ENCODE measurements at regions of chrX and their contacts with region 1.

Region 1: GRCh38 chrX:106415276-106415895 is 196.4 kb upstream of the RADX start:
- DNase-seq: peak; percentile 9
- ATAC-seq: no peak
- H3K4me3 Mint-ChIP-seq: no peak overlapping the region
- H3K27ac Mint-ChIP-seq: no peak overlapping the region
- H3K4me1 Mint-ChIP-seq: no peaks in the 10 kb centered on the region
- H3K27me3 Mint-ChIP-seq: no peaks in the 10 kb centered on the region

Region 2: DNA sequence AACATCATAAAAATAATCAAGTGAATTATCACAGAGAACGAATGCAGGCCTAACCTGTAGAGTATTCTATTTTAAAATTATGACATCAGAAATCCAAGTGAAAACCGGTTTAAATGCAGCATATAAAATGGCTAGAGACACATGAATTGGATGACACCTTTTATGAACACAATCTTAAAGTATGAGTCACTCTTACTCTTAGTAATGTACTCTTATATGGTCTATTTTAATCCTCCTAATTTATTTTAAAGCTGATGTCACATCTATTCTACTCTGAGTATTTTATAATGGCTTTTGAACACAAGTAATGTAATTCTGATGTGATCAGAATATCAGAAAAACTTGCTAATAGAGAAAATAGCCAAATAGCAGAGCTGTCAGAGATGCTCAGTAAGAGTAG is 35.0 kb after region 1 on chrX:
- CTCF ChIA-PET with region 1: no interaction called
- POLR2A ChIA-PET with region 1: no interaction called
- intact Hi-C with region 1: no loop called
- DNase-seq: no peak
- ATAC-seq: no peak
- H3K4me3 Mint-ChIP-seq: no peak overlapping the region
- H3K27ac Mint-ChIP-seq: no peak overlapping the region
- H3K4me1 Mint-ChIP-seq: no peaks in the 10 kb centered on the region
- H3K27me3 Mint-ChIP-seq: peaks cover 2% of the 10 kb centered on the region

Region 3: DNA sequence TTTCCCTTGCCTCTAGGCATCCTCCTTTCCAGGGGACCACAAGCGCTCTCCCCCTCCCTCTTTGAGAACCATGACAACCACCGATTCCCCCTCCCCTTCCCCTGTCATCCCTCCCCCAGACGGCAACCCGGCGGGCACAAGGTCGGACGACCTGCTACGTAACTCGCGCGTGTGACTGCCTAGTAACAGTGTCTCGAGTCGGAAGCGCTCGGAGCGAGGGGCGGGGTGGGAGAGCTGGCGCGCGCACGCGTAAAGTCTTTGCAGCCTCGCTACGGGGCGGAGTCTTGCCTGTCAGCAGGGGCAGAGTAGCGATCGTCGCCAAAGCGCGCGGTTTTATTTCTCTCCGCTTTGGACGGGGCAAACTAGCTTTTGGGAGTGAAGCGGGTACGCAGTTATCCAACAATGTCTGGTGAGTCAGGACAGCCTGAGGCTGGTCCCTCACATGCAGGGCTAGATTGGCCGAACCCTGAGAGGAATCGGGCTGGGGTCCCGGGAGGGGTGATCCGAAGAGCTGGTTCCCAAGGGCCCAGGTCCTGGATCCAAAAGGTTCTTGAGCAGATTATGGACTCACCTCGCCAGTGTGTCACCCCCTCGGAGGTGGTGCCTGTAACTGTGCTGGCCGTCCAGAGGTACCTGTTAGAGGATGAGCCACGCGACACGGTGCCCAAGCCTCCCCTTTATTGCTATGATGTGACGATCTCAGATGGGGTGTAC is 196.4 kb after region 1 on chrX and contains the start of gene RADX:
- CTCF ChIA-PET with region 1: no interaction called
- POLR2A ChIA-PET with region 1: no interaction called
- intact Hi-C with region 1: loop called in 1 of 2 experiments (anchors 10 kb)
- DNase-seq: peak; percentile 92
- ATAC-seq: peak; percentile 99
- H3K4me3 Mint-ChIP-seq: peak within 1 kb of the TSS; percentile 81
- H3K27ac Mint-ChIP-seq: peak within 1 kb of the TSS; percentile 86
- H3K4me1 Mint-ChIP-seq: peaks cover 14% of the 10 kb centered on the region
- H3K27me3 Mint-ChIP-seq: no peaks in the 10 kb centered on the region
- total RNA-seq, gene RADX: 9.3 to 14.7 TPM

Region 4: DNA sequence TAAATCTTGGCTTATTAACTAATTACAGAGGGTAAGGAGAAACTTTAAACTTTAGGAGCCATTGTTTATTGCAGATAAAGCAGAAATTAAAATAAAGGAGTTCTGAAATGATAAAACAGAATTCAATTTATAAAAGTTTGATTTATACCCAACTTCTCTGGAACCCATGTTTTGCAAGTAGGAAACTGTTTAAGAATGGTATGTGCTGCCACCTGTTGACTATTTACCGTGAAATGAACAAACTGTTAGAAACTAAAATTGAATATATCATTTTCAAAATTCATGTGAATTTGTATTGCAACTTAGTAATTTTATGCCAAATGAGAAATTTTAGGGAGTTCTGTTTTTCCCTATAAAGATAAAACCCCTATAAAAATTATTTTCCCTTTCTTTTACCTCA is 376.1 kb after region 1 on chrX:
- CTCF ChIA-PET with region 1: no interaction called
- POLR2A ChIA-PET with region 1: no interaction called
- intact Hi-C with region 1: loop called in 1 of 2 experiments (anchors 1 kb)
- DNase-seq: no peak
- ATAC-seq: no peak
- H3K4me3 Mint-ChIP-seq: no peak overlapping the region
- H3K27ac Mint-ChIP-seq: no peak overlapping the region
- H3K4me1 Mint-ChIP-seq: no peaks in the 10 kb centered on the region
- H3K27me3 Mint-ChIP-seq: peaks cover 2% of the 10 kb centered on the region

Measured in activated CD4-positive, alpha-beta T cell treated with anti-CD3 and anti-CD28 coated beads for 36 hours (primary cell).